ENCODE measurements at regions of chr5 and their contacts with region 1.

Region 1: GRCh38 chr5:16508730-16509531 is 43.3 kb upstream of the ZNF622 start:
- DNase-seq: peak; percentile 89
- H3K4me3 ChIP-seq: peak overlapping the region; percentile 47 to 72 (median 51)
- H3K27ac ChIP-seq: peak overlapping the region; percentile 70
- H3K4me1 ChIP-seq: peaks cover 16% of the 10 kb centered on the region
- H3K27me3 ChIP-seq: no peaks in the 10 kb centered on the region
- CTCF ChIP-seq: no peak

Region 2: DNA sequence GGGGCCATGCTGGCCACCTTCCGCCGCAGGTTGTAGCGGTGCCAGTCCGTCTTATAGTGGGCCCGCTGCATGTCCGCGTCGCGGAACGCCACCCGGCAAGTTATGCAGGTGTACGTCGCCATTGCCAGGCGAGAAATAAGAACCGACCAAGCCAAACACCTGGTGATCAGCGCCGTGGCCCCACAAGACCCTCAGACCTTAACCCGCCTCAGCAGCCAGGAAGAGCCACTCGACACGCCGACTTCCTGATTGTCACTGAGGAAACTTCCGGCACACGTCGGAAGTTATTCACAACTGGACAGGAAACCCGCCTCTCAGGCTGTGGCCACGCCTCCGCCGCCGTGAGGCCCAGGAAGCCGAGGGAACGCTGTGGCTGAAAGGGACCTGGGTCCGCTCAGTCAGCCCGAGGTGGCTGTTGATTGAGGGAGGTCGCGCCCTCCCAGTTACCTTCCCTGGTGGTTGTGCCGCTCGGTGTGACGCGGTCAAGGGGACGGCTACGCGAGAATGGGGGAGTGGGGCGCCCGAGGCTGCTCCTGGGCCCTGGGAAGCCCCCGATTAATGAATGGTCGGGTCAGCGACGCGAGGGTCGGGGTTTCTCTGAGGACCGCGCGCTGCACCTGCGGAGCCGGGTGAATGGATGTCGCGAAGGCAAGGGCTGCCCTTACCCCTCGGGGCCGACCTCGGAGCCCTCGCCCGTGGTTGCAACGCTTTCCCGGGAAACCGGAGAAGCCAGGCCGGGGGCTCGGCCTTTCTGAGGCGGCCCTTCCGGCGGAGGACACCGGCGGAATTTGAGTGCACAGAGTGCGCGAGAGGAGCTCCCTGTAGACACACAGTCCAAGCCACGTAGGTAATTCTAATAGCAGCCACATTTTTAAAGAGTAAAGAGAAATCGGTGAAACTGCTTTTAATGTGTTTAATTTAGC is 43.1 kb before region 1 on chr5 and contains the start of gene ZNF622:
- CTCF ChIA-PET with region 1: no interaction called
- dilution Hi-C with region 1: no loop called
- in situ Hi-C with region 1: no loop called
- intact Hi-C with region 1: loop called (anchors 2 kb)
- DNase-seq: peak; percentile 89
- H3K4me3 ChIP-seq: peak within 1 kb of the TSS; percentile 78 to 98 (median 87)
- H3K27ac ChIP-seq: peak within 1 kb of the TSS; percentile 83
- H3K4me1 ChIP-seq: peaks cover 33% of the 10 kb centered on the region
- H3K27me3 ChIP-seq: no peaks in the 10 kb centered on the region
- CTCF ChIP-seq: no peak
- total RNA-seq, gene ZNF622: 32.2 to 32.3 TPM

Region 3: DNA sequence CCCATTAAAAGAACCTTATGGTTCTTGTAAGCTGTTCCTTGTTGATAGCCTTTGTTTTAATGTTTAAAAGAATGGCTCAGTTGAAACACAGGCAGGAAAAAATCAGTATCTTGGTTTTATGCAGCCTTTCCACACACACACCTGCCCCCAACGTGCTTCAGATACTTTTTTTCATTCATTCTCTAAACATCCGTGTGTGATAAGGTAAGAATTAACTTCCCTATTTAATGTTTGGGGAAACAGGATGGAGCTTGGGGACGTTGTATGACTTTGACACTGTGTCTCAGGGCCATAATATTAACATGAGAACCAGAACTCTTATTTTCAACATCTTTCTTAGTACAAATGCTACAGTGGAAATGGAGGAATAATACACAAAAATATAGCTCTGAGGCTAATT is 37.5 kb before region 1 on chr5:
- CTCF ChIA-PET with region 1: interaction called, 23 read pairs
- dilution Hi-C with region 1: no loop called
- in situ Hi-C with region 1: no loop called
- intact Hi-C with region 1: no loop called
- DNase-seq: no peak
- H3K4me3 ChIP-seq: no peak overlapping the region
- H3K27ac ChIP-seq: no peak overlapping the region
- H3K4me1 ChIP-seq: peaks cover 18% of the 10 kb centered on the region
- H3K27me3 ChIP-seq: no peaks in the 10 kb centered on the region
- CTCF ChIP-seq: no peak

Region 4: DNA sequence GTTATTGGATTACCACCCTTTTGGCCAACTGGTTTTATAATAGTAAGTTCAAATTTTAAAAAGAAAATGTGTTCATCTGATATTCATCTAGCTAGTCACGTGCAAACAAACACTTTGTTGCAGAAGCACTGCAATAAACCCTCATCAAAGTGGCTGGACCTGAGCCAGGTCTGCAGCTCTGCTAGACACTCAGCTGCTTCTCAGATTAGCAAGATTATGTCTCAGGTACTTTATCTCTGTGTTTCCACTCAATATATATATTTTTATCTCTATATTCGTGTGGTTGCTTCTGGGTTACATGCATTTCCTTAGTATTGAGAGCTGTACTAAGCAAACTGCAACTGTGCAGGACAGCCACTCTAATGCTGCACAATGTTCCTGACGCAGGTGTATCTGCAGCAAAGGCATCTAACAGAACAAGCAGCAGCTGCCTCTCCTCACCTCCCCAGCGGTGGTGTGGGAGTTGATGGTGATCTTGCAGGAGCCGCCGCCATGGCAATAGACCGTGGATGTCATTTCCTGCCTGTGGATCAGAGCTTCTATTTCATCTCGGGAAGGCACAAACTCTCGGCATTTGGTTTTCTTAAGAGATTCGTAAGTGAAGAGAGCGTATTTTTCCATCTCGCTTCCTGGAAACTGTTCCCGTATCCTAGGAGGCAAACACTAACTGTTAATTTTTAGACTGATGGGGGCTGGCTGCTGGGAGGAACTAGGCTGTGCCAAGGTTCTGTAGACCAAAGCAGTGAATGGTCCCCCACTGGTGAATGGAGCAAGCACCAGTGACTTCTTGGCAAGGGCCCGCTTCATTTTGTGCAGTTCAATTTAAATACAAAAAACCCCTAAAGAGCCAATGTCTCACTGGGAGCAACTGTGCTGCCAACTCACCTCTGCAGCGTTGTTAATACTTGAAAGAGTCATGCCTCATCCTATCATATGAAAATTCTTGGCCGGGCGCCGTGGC is 164.6 kb after region 1 on chr5:
- CTCF ChIA-PET with region 1: no interaction called
- dilution Hi-C with region 1: no loop called
- in situ Hi-C with region 1: no loop called
- intact Hi-C with region 1: no loop called
- DNase-seq: peak; percentile 32
- H3K4me3 ChIP-seq: no peak overlapping the region
- H3K27ac ChIP-seq: no peak overlapping the region
- H3K4me1 ChIP-seq: peaks cover 7% of the 10 kb centered on the region
- H3K27me3 ChIP-seq: no peaks in the 10 kb centered on the region
- CTCF ChIP-seq: no peak

Measured in mammary epithelial cell (primary cell).